MCF 10A (cell line): ENCODE measurements at regions of chr7 and their contacts with region 1.

Region 1: DNA sequence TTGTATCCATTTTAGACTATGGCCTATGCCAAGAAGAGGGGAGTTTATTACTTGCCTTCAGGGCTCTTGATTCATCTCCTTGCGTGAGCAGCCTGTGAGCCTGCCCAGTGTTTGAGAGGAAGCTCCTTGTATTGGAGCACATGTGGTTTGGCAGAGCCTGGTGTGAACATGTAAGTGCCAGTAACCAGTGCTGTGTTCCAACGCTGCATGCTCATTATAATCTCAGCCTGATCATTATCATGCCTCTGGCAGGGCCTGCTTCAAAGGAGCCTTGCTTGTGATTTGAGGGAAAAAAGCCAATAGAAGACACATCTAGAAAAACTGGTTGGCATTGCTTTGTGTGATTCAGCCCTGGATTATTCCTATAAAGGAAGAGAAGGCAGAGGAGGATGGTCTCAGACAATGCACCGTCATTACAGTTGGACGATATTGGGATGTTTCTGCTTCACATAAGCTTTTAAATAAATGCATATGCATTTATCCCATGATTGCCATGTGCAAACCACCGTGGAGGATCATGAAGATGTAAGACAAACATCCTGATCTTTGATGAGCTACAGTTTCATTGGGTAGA is 203.4 kb upstream of the AHR start:
- DNase-seq: peak; percentile 99
- H3K4me3 Mint-ChIP-seq: no peak overlapping the region
- H3K27ac Mint-ChIP-seq: peak overlapping the region; percentile 87
- H3K4me1 Mint-ChIP-seq: peaks cover 49% of the 10 kb centered on the region
- H3K27me3 Mint-ChIP-seq: no peaks in the 10 kb centered on the region
- CTCF ChIP-seq: no peak

Region 2: DNA sequence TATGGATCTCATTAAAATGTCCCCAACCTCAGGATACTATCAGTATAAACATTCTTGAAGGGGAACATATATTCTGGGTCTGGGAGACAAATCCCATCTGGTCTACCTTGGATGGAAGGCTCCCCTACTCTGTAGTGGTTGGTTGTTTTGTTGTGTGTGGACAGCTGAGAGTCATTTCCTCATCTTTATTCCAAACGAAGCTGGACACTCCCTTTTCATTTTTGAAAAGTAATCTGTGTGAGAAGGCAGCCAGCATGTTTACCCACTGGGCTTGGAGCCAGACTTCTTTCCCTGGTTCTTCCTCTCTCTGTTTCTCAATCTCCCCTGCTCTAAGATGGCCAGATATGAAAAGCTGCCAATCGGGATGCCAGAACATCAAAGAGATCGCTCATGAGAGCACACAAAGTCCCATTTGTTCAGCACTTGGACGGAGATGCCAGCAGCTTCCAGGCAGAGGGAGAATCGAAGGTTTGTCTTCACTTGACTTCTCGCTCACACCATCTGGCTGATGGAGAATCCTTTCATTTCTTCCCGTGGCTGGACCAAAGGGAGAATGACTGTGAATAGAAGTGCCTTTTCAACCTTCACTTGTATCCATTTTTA is 105.2 kb before region 1 on chr7:
- CTCF ChIA-PET with region 1: interaction called, 4 read pairs
- POLR2A ChIA-PET with region 1: interaction called, 17 read pairs
- intact Hi-C with region 1: no loop called
- DNase-seq: peak; percentile 99
- H3K4me3 Mint-ChIP-seq: peak overlapping the region; percentile 70
- H3K27ac Mint-ChIP-seq: peak overlapping the region; percentile 78
- H3K4me1 Mint-ChIP-seq: peaks cover 24% of the 10 kb centered on the region
- H3K27me3 Mint-ChIP-seq: no peaks in the 10 kb centered on the region
- CTCF ChIP-seq: no peak

Region 3: DNA sequence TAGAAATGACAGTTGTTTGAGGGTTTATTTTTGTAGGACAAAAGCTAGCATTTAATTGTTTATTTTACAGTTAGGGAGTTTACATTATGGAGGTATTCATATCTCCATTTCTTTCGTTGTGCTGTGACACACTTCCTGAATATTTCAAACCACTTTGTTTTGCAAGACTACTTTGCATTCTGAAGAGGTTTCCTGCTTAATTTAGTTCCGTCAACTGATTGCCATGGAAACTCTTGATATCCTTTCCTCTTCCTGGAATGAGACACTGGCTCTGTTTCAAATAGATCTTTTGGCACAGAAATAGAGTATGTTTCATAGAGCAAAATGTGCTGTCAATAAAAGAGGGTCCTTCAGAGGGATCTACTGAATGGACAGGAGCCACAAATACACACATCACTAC is 53.8 kb before region 1 on chr7:
- CTCF ChIA-PET with region 1: no interaction called
- POLR2A ChIA-PET with region 1: interaction called, 3 read pairs
- intact Hi-C with region 1: loop called (anchors 5 kb)
- DNase-seq: peak; percentile 73
- H3K4me3 Mint-ChIP-seq: no peak overlapping the region
- H3K27ac Mint-ChIP-seq: peak overlapping the region; percentile 61
- H3K4me1 Mint-ChIP-seq: peaks cover 27% of the 10 kb centered on the region
- H3K27me3 Mint-ChIP-seq: no peaks in the 10 kb centered on the region
- CTCF ChIP-seq: no peak

Region 4: GRCh38 chr7:17109017-17109416 is 13.9 kb after region 1 on chr7:
- CTCF ChIA-PET with region 1: interaction called, 8 read pairs
- POLR2A ChIA-PET with region 1: interaction called, 14 read pairs
- intact Hi-C with region 1: no loop called
- DNase-seq: peak; percentile 77
- H3K4me3 Mint-ChIP-seq: peak overlapping the region; percentile 38
- H3K27ac Mint-ChIP-seq: peak overlapping the region; percentile 57
- H3K4me1 Mint-ChIP-seq: peaks cover 10% of the 10 kb centered on the region
- H3K27me3 Mint-ChIP-seq: no peaks in the 10 kb centered on the region
- CTCF ChIP-seq: no peak

Region 5: GRCh38 chr7:17144322-17144721 is 49.2 kb after region 1 on chr7:
- CTCF ChIA-PET with region 1: no interaction called
- POLR2A ChIA-PET with region 1: interaction called, 3 read pairs
- intact Hi-C with region 1: loop called (anchors 2 kb)
- DNase-seq: peak; percentile 64
- H3K4me3 Mint-ChIP-seq: no peak overlapping the region
- H3K27ac Mint-ChIP-seq: no peak overlapping the region
- H3K4me1 Mint-ChIP-seq: peaks cover 8% of the 10 kb centered on the region
- H3K27me3 Mint-ChIP-seq: no peaks in the 10 kb centered on the region
- CTCF ChIP-seq: no peak

Region 6: GRCh38 chr7:17234398-17235031 is 139.4 kb after region 1 on chr7:
- CTCF ChIA-PET with region 1: no interaction called
- POLR2A ChIA-PET with region 1: interaction called, 3 read pairs
- intact Hi-C with region 1: loop called (anchors 1 kb)
- DNase-seq: peak; percentile 92
- H3K4me3 Mint-ChIP-seq: peak overlapping the region; percentile 31
- H3K27ac Mint-ChIP-seq: peak overlapping the region; percentile 96
- H3K4me1 Mint-ChIP-seq: peaks cover 35% of the 10 kb centered on the region
- H3K27me3 Mint-ChIP-seq: no peaks in the 10 kb centered on the region
- CTCF ChIP-seq: no peak

Region 7: DNA sequence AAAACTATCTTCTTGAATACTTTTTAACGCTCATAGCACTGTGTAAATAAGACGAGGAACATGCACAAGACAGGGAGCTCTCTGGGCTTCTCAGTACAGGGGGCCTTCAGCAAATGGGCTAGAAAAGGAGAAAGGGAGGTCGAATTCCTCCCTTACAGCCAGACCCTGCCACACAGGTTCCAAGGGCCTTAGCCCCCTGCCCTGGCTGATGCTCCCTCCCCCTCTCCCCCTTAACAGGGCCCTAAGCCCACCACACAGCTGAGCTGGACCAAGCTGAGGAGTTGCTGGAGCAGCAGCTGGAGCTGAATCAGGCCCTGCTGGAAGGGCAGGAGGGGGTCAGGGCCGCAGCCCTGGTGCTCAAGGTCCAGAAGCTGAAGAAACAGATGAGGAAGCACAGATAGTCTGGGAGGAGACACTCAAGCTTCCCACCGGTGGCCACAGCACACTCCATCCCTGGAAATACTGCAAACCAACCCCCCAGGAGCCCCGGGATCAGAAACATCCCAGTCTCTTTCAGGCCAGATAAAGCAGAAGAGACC is 691.3 kb after region 1 on chr7:
- CTCF ChIA-PET with region 1: no interaction called
- POLR2A ChIA-PET with region 1: no interaction called
- intact Hi-C with region 1: no loop called
- DNase-seq: no peak
- H3K4me3 Mint-ChIP-seq: no peak overlapping the region
- H3K27ac Mint-ChIP-seq: no peak overlapping the region
- H3K4me1 Mint-ChIP-seq: peaks cover 13% of the 10 kb centered on the region
- H3K27me3 Mint-ChIP-seq: no peaks in the 10 kb centered on the region
- CTCF ChIP-seq: no peak